ENCODE measurements at regions of chr15 and their contacts with region 1.

Region 1: GRCh38 chr15:44536962-44537734 is at the start of gene EIF3J:
- DNase-seq: peak; percentile 88 to 99 (median 95)
- ATAC-seq: peak; percentile 88
- H3K4me3 ChIP-seq: peak within 1 kb of the TSS; percentile 83 to 98
- H3K4me3 Mint-ChIP-seq: peak within 1 kb of the TSS; percentile 95
- H3K27ac ChIP-seq: peak within 1 kb of the TSS; percentile 85 to 92
- H3K27ac Mint-ChIP-seq: peak within 1 kb of the TSS; percentile 96
- H3K4me1 ChIP-seq: peaks cover 42% of the 10 kb centered on the region
- H3K4me1 Mint-ChIP-seq: peaks cover 54% of the 10 kb centered on the region
- H3K27me3 ChIP-seq: no peaks in the 10 kb centered on the region
- H3K27me3 Mint-ChIP-seq: no peaks in the 10 kb centered on the region
- CTCF ChIP-seq: no peak
- total RNA-seq, gene EIF3J: 63.7 to 68.9 TPM

Region 2: DNA sequence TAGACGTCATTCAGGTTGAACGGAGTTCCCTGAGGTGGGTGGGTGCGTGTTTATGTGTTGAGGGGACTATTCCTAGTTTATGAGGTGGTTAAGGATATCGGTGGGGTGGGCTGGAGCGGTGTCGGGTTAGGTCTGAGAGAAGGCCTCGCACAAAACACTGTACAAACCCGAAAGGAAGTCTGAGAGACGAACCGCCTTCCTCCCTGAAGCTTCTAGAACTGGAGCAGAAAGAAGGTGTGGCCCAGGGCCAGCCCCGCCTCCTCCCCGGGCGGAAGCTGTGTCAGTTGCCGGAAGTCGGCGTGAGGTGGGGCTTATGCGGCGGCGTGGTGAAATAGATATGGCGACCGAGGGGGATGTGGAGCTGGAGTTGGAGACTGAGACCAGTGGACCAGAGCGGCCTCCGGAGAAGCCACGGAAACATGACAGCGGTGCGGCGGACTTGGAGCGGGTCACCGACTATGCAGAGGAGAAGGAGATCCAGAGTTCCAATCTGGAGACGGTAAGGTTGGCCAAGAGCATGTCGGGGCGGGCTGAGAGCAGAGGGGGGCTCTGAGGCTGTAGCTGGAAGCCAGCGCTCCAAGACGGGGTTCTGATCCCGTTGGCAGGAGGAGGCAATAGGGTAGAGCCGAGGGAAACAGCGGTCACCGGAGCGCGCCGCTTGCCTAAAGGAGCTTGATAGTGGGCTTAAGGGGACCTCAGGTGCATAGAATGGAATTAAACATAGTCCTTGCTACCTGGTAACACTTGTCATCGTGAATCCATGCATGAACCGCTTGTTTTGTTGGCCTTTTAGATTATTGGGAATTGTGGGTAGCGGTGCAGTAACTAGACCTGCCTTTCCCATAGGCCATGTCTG is 736.6 kb before region 1 on chr15 and contains the start of gene HYPK:
- CTCF ChIA-PET with region 1: no interaction called
- POLR2A ChIA-PET with region 1: no interaction called
- intact Hi-C with region 1: loop called in 1 of 2 experiments (anchors 5 kb)
- DNase-seq: peak; percentile 83 to 95 (median 93)
- ATAC-seq: peak; percentile 99
- H3K4me3 ChIP-seq: peak within 1 kb of the TSS; percentile 63 to 98
- H3K4me3 Mint-ChIP-seq: peak within 1 kb of the TSS; percentile 99
- H3K27ac ChIP-seq: peak within 1 kb of the TSS; percentile 60 to 93
- H3K27ac Mint-ChIP-seq: peak within 1 kb of the TSS; percentile 98
- H3K4me1 ChIP-seq: peaks cover 25% of the 10 kb centered on the region
- H3K4me1 Mint-ChIP-seq: peaks cover 45% of the 10 kb centered on the region
- H3K27me3 ChIP-seq: no peaks in the 10 kb centered on the region
- H3K27me3 Mint-ChIP-seq: no peaks in the 10 kb centered on the region
- CTCF ChIP-seq: no peak
- total RNA-seq, gene HYPK: 10.9 to 14.0 TPM

Region 3: GRCh38 chr15:44286814-44287452 is 250.2 kb before region 1 on chr15:
- CTCF ChIA-PET with region 1: interaction called, 3 read pairs
- POLR2A ChIA-PET with region 1: interaction called, 3 read pairs
- intact Hi-C with region 1: loop called (anchors 1 kb)
- DNase-seq: peak in 2 of 9 experiments; percentile 7 to 36
- ATAC-seq: no peak
- H3K4me3 ChIP-seq: peak overlapping the region; percentile 77 to 91
- H3K4me3 Mint-ChIP-seq: peak overlapping the region; percentile 94
- H3K27ac ChIP-seq: peak overlapping the region; percentile 95 to 97
- H3K27ac Mint-ChIP-seq: peak overlapping the region; percentile 98
- H3K4me1 ChIP-seq: peaks cover 26% of the 10 kb centered on the region
- H3K4me1 Mint-ChIP-seq: peaks cover 42% of the 10 kb centered on the region
- H3K27me3 ChIP-seq: no peaks in the 10 kb centered on the region
- H3K27me3 Mint-ChIP-seq: peaks cover 2% of the 10 kb centered on the region
- CTCF ChIP-seq: peak; percentile 36

Region 4: GRCh38 chr15:44711356-44712107 is 174.4 kb after region 1 on chr15 and contains the start of gene B2M:
- CTCF ChIA-PET with region 1: no interaction called
- POLR2A ChIA-PET with region 1: interaction called, 7 read pairs
- intact Hi-C with region 1: loop called in 1 of 2 experiments (anchors 5 kb)
- DNase-seq: peak; percentile 92 to 99 (median 95)
- ATAC-seq: peak; percentile 78
- H3K4me3 ChIP-seq: peak within 1 kb of the TSS; percentile 90 to 99
- H3K4me3 Mint-ChIP-seq: peak within 1 kb of the TSS; percentile 100
- H3K27ac ChIP-seq: peak within 1 kb of the TSS; percentile 97 to 98
- H3K27ac Mint-ChIP-seq: peak within 1 kb of the TSS; percentile 100
- H3K4me1 ChIP-seq: peaks cover 35% of the 10 kb centered on the region
- H3K4me1 Mint-ChIP-seq: peaks cover 54% of the 10 kb centered on the region
- H3K27me3 ChIP-seq: no peaks in the 10 kb centered on the region
- H3K27me3 Mint-ChIP-seq: no peaks in the 10 kb centered on the region
- CTCF ChIP-seq: no peak
- total RNA-seq, gene B2M: 4,250 to 4,545 TPM

Region 5: DNA sequence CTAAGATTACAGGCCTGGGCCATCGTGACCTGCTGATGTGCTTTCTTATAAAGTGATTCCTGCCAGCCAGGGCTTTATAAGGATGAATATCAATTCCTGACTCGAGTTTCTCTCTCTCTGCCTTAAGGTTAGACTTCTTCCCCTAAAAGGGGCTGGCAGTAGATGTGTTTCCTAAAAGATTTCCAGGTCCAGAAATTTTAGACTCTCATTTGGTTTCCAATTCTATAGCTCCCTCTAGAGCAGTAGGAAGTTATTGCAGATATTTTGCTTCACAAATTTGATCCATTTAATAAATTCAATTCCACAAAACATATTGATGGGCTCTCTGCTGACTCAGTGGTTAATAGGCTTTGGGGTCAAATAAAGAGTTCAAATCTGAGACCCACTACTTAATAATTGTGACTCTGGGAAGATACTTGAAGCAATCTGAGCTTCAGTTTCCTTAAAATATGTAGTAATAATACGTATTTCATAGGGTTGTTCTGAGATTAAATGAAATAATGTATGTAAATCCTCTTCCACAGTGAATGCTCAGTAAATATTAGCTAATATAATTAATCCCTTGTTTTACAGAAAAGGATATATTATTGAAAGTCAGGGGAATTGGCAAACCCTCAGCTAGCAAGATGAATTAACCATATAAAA is 201.3 kb after region 1 on chr15:
- CTCF ChIA-PET with region 1: no interaction called
- POLR2A ChIA-PET with region 1: no interaction called
- intact Hi-C with region 1: loop called in 1 of 2 experiments (anchors 5 kb)
- DNase-seq: peak in 2 of 9 experiments; percentile 69 to 78
- ATAC-seq: no peak
- H3K4me3 ChIP-seq: no peak overlapping the region
- H3K4me3 Mint-ChIP-seq: peak overlapping the region; percentile 15
- H3K27ac ChIP-seq: peak overlapping the region in 1 of 2 experiments; percentile 91
- H3K27ac Mint-ChIP-seq: peak overlapping the region; percentile 78
- H3K4me1 ChIP-seq: peaks cover 50% of the 10 kb centered on the region
- H3K4me1 Mint-ChIP-seq: peaks cover 57% of the 10 kb centered on the region
- H3K27me3 ChIP-seq: no peaks in the 10 kb centered on the region
- H3K27me3 Mint-ChIP-seq: no peaks in the 10 kb centered on the region
- CTCF ChIP-seq: peak; percentile 78

Region 6: GRCh38 chr15:45495588-45495987 is 958.4 kb after region 1 on chr15:
- CTCF ChIA-PET with region 1: no interaction called
- POLR2A ChIA-PET with region 1: no interaction called
- intact Hi-C with region 1: no loop called
- DNase-seq: no peak
- ATAC-seq: no peak
- H3K4me3 ChIP-seq: no peak overlapping the region
- H3K4me3 Mint-ChIP-seq: no peak overlapping the region
- H3K27ac ChIP-seq: no peak overlapping the region
- H3K27ac Mint-ChIP-seq: no peak overlapping the region
- H3K4me1 ChIP-seq: no peaks in the 10 kb centered on the region
- H3K4me1 Mint-ChIP-seq: no peaks in the 10 kb centered on the region
- H3K27me3 ChIP-seq: no peaks in the 10 kb centered on the region
- H3K27me3 Mint-ChIP-seq: no peaks in the 10 kb centered on the region
- CTCF ChIP-seq: no peak

Measured in CD8-positive, alpha-beta T cell (primary cell).